Activated CD4-positive, alpha-beta T cell treated with anti-CD3 and anti-CD28 coated beads, Interleukin-2, amount 10 ng/mL, durations not matched to agents 7 days and 5 days (primary cell): ENCODE measurements at regions of chr3 and their contacts with region 1.

Region 1: DNA sequence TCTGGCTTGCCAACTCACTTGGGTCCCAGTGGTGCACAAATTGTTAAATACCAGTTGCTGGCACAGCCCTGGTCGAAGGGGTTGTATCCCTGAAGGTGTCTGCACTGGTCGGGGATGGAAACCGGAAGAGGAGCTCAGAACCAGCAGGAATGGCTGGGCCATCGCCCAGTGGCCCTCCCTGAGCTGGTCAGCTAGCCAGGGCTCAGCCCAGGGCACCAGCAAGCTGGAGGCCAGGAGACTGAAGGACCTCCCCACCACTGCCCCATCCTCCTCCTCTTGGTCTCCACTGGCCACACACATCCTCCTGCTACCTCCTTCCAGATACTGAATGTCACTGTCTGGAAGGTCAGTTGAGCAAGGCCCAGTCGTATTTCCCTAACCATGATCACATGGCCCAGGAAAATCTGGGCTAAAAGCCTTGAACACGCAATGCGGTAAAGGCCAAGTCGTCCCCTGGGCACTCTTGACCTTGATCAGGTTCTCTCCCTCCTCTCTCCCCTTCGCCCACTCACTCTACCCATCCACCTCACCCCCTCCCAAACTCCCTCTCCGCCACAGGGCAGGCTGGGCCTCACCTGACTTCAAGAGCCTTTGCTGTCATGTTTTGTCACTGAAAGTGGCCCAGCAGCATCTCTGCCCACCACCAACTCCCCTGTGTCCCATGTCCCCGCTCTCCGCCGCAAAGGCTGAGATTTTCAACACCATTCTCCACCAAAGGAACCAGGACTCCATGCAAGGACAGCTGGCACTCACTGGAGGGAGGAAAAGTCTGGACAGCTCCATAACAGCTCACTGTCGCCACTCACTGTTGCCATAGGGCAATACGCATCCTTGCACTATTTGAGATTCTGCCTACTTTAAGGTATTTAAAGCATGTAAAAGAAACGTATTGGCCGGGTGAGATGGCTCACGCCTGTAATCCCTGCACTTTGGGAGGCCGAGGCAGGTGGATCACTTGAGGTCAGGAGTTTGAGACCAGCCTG is 12.1 kb downstream of the ZDHHC19 start:
- DNase-seq: no peak
- H3K4me3 Mint-ChIP-seq: no peak overlapping the region
- H3K27ac Mint-ChIP-seq: no peak overlapping the region
- H3K4me1 Mint-ChIP-seq: peaks cover 23% of the 10 kb centered on the region
- H3K27me3 Mint-ChIP-seq: peaks cover 14% of the 10 kb centered on the region

Region 2: DNA sequence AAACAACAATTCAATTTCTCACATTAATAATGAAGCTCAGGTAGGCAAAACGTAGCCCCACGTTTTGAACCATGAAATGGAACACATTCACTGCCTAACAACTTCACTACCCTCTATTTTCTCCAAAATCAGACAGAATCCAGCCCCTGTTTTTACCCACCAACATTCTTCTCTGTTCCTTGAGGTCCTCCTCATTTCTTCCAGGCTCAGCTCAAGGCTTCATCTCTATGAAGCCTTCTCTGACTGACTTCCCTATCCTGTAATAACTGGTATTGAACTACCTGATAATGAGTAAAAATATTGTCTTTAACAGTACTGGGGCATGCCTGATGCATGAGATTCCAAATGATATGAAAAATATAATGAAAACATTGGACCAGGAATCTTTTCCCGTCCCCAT is 119.4 kb before region 1 on chr3:
- CTCF ChIA-PET with region 1: interaction called, 40 read pairs
- POLR2A ChIA-PET with region 1: no interaction called
- DNase-seq: no peak
- H3K4me3 Mint-ChIP-seq: peak overlapping the region; percentile 90
- H3K27ac Mint-ChIP-seq: peak overlapping the region; percentile 90
- H3K4me1 Mint-ChIP-seq: peaks cover 48% of the 10 kb centered on the region
- H3K27me3 Mint-ChIP-seq: no peaks in the 10 kb centered on the region

Region 3: GRCh38 chr3:196186651-196187573 is 12.2 kb before region 1 on chr3:
- CTCF ChIA-PET with region 1: interaction called, 22 read pairs
- POLR2A ChIA-PET with region 1: no interaction called
- DNase-seq: no peak
- H3K4me3 Mint-ChIP-seq: peak overlapping the region; percentile 44
- H3K27ac Mint-ChIP-seq: peak overlapping the region; percentile 91
- H3K4me1 Mint-ChIP-seq: peaks cover 53% of the 10 kb centered on the region
- H3K27me3 Mint-ChIP-seq: no peaks in the 10 kb centered on the region

Region 4: GRCh38 chr3:196214783-196215441 is 15.8 kb after region 1 on chr3:
- CTCF ChIA-PET with region 1: no interaction called
- POLR2A ChIA-PET with region 1: no interaction called
- DNase-seq: no peak
- H3K4me3 Mint-ChIP-seq: no peak overlapping the region
- H3K27ac Mint-ChIP-seq: no peak overlapping the region
- H3K4me1 Mint-ChIP-seq: peaks cover 22% of the 10 kb centered on the region
- H3K27me3 Mint-ChIP-seq: no peaks in the 10 kb centered on the region